Endothelial cell of umbilical vein (primary cell): ENCODE measurements at regions of chr21 and their contacts with region 1.

Region 1: DNA sequence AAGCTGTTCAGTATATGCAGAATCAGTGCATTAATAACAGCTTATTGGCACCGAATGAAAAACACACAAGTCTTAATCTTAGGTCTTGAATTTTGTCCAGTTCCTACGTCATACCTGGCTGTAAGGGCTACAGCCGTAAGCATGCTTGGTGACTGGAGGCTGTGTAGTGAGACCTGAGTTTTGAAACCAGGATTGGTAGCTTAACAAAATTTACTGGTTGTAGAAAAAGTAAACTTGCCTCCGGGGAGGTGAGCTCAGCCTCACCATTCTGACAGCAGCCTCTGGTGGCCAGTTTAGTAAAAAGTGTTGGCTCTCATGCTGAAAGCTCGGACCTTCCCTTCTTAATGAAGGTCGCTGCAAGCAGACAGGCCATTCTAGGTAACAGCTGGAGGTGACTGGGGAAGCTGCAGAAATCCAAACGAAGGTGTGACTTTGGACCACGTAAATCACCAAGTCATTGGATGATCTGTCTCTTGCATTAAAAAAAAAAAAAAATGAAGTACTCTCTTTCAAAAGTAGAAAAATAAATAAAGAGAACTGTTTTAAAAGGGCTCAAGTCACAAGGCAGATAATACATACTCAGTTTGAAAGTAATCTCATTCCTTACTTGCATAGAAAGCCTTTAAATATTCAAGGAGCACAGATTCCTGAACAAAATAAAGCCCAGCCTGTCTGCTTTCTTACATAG is 48.9 kb downstream of the HLCS start:
- DNase-seq: peak; percentile 54
- H3K4me3 ChIP-seq: no peak overlapping the region
- H3K27ac ChIP-seq: no peak overlapping the region
- H3K4me1 ChIP-seq: no peaks in the 10 kb centered on the region
- H3K27me3 ChIP-seq: no peaks in the 10 kb centered on the region
- CTCF ChIP-seq: peak; percentile 57 to 61
- POLR2A ChIP-seq: no peak

Region 2: DNA sequence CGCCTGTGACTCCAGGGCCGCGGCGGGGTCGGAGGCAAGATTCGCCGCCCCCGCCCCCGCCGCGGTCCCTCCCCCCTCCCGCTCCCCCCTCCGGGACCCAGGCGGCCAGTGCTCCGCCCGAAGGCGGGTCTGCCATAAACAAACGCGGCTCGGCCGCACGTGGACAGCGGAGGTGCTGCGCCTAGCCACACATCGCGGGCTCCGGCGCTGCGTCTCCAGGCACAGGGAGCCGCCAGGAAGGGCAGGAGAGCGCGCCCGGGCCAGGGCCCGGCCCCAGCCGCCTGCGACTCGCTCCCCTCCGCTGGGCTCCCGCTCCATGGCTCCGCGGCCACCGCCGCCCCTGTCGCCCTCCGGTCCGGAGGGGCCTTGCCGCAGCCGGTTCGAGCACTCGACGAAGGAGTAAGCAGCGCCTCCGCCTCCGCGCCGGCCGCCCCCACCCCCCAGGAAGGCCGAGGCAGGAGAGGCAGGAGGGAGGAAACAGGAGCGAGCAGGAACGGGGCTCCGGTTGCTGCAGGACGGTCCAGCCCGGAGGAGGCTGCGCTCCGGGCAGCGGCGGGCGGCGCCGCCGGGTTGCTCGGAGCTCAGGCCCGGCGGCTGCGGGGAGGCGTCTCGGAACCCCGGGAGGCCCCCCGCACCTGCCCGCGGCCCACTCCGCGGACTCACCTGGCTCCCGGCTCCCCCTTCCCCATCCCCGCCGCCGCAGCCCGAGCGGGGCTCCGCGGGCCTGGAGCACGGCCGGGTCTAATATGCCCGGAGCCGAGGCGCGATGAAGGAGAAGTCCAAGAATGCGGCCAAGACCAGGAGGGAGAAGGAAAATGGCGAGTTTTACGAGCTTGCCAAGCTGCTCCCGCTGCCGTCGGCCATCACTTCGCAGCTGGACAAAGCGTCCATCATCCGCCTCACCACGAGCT is 218.4 kb before region 1 on chr21 and contains the start of gene SIM2:
- CTCF ChIA-PET with region 1: interaction called, 11 read pairs
- POLR2A ChIA-PET with region 1: no interaction called
- dilution Hi-C with region 1: no loop called
- intact Hi-C with region 1: no loop called
- DNase-seq: no peak
- H3K4me3 ChIP-seq: peak within 1 kb of the TSS in 1 of 3 experiments; percentile 6
- H3K27ac ChIP-seq: no peak within 1 kb of the TSS
- H3K4me1 ChIP-seq: peaks cover 23% of the 10 kb centered on the region
- H3K27me3 ChIP-seq: peaks cover 88 to 98% of the 10 kb centered on the region in 2 experiments
- CTCF ChIP-seq: no peak
- POLR2A ChIP-seq: no peak
- total RNA-seq, gene SIM2: not detected in 2 replicates

Region 3: GRCh38 chr21:36753556-36753955 is 164.1 kb before region 1 on chr21:
- CTCF ChIA-PET with region 1: interaction called, 78 read pairs
- POLR2A ChIA-PET with region 1: no interaction called
- dilution Hi-C with region 1: no loop called
- intact Hi-C with region 1: loop called (anchors 2 kb)
- DNase-seq: peak; percentile 20
- H3K4me3 ChIP-seq: no peak overlapping the region
- H3K27ac ChIP-seq: peak overlapping the region; percentile 16
- H3K4me1 ChIP-seq: peaks cover 16% of the 10 kb centered on the region
- H3K27me3 ChIP-seq: no peaks in the 10 kb centered on the region
- CTCF ChIP-seq: no peak
- POLR2A ChIP-seq: no peak

Region 4: GRCh38 chr21:36889401-36889800 is 28.2 kb before region 1 on chr21:
- CTCF ChIA-PET with region 1: interaction called, 11 read pairs
- POLR2A ChIA-PET with region 1: no interaction called
- dilution Hi-C with region 1: no loop called
- intact Hi-C with region 1: no loop called
- DNase-seq: no peak
- H3K4me3 ChIP-seq: no peak overlapping the region
- H3K27ac ChIP-seq: no peak overlapping the region
- H3K4me1 ChIP-seq: no peaks in the 10 kb centered on the region
- H3K27me3 ChIP-seq: no peaks in the 10 kb centered on the region
- CTCF ChIP-seq: no peak
- POLR2A ChIP-seq: no peak

Region 5: GRCh38 chr21:37153196-37153934 is 235.8 kb after region 1 on chr21:
- CTCF ChIA-PET with region 1: no interaction called
- POLR2A ChIA-PET with region 1: no interaction called
- dilution Hi-C with region 1: no loop called
- intact Hi-C with region 1: no loop called
- DNase-seq: peak; percentile 82
- H3K4me3 ChIP-seq: no peak overlapping the region
- H3K27ac ChIP-seq: peak overlapping the region; percentile 66
- H3K4me1 ChIP-seq: peaks cover 27% of the 10 kb centered on the region
- H3K27me3 ChIP-seq: no peaks in the 10 kb centered on the region
- CTCF ChIP-seq: no peak
- POLR2A ChIP-seq: no peak